Gastrocnemius medialis (tissue), 4 donors: ENCODE measurements at regions of chr2 and their contacts with region 1.

Region 1: DNA sequence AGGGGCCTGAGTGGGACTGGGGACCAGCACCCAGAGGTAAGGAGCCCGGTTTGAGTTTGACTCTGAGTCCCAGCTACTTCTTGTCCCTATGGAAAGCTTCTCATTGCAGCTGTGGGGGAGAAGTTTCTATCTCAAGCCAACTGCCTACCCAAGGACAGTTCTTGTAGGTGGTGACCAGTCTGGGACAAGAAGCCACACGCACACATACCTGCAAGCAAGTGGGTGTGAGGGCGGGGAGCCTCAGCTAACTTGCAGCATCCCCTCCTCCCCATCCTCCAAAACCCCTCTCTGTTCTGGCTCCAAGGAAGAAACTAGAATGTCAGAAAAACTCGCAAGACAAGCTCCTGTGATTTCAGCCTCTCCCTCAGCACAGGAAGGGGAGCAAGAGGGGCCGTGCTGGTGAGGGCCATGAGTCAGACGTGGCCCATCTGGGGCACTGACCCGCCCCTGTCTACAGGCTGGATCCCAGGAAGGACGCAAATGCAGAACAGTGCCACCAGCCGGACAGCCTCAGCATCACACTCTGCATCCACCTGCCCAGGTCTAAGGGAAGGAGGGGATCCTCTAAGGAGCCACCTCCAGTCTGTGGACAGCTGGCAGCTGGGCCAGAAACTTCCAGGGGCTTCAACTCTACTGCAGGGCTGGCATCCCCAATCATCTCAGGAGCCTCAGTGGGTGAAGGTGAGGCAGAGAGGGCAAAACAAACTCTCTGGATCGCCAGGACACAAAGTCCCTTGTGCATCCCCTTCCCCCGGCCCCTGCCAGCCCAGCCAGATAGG is 103.4 kb downstream of the TNS1 start:
- DNase-seq: peak; percentile 64 to 88
- ATAC-seq: peak in 1 of 2 donors; percentile 12
- H3K4me3 ChIP-seq: no peak overlapping the region
- H3K27ac ChIP-seq: peak overlapping the region; percentile 87 to 94 (median 92)
- H3K4me1 ChIP-seq: peaks cover 73 to 74% of the 10 kb centered on the region in 2 donors
- H3K27me3 ChIP-seq: no peaks in the 10 kb centered on the region
- CTCF ChIP-seq: peak; percentile 60 to 86 (median 71)
- POLR2A ChIP-seq: peak in 1 of 2 donors; percentile 50

Region 2: DNA sequence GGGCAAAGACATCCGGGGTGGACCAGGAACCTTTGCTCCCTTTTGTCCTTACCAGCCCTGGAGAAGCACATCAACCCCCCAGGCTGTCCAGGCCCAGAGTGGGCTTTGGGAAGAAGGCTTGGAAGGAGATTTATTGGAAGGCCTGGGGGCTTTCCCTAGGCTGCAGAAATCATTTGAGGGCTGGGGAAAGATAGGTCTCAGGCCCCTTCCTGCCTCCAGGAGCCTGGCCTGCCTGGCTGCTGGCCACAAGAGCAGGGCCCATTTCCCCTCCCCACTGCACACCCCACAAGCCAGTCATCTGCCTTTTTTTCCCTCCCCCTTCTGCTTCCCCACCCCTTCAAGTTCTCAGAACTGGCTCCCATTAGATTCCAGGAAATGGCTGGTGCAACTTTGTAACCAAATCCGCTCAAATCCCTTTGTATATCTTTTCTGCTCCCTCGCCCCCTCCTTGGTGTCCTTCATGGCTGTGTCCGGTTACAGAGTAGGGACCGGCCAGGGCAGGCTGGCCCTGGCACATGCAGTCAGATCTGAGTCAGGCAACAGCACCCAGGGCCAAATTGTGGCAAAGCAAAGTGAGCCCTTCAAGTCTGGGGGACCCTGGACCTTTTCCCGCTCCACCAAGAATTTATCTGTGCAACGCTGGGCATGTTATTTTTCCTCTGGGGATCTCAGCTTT is 1018.8 kb before region 1 on chr2:
- in situ Hi-C with region 1: no loop called
- intact Hi-C with region 1: loop called (anchors 5 kb)
- DNase-seq: peak; percentile 79 to 89
- ATAC-seq: peak; percentile 64 to 72
- H3K4me3 ChIP-seq: no peak overlapping the region
- H3K27ac ChIP-seq: peak overlapping the region; percentile 88 to 95 (median 90)
- H3K4me1 ChIP-seq: peaks cover 77 to 84% of the 10 kb centered on the region in 2 donors
- H3K27me3 ChIP-seq: no peaks in the 10 kb centered on the region
- CTCF ChIP-seq: no peak
- POLR2A ChIP-seq: no peak

Region 3: GRCh38 chr2:217836901-217837491 is 62.4 kb before region 1 on chr2:
- in situ Hi-C with region 1: no loop called
- intact Hi-C with region 1: loop called (anchors 2 kb)
- DNase-seq: peak; percentile 93 to 98
- ATAC-seq: peak; percentile 39 to 41
- H3K4me3 ChIP-seq: peak overlapping the region in 1 of 4 donors; percentile 9
- H3K27ac ChIP-seq: peak overlapping the region; percentile 99 to 100 (median 99)
- H3K4me1 ChIP-seq: peaks cover 96% of the 10 kb centered on the region in 2 donors
- H3K27me3 ChIP-seq: no peaks in the 10 kb centered on the region
- CTCF ChIP-seq: peak in 3 of 5 experiments; percentile 30 to 43 (median 34)
- POLR2A ChIP-seq: peak in 1 of 2 donors; percentile 48

Region 4: DNA sequence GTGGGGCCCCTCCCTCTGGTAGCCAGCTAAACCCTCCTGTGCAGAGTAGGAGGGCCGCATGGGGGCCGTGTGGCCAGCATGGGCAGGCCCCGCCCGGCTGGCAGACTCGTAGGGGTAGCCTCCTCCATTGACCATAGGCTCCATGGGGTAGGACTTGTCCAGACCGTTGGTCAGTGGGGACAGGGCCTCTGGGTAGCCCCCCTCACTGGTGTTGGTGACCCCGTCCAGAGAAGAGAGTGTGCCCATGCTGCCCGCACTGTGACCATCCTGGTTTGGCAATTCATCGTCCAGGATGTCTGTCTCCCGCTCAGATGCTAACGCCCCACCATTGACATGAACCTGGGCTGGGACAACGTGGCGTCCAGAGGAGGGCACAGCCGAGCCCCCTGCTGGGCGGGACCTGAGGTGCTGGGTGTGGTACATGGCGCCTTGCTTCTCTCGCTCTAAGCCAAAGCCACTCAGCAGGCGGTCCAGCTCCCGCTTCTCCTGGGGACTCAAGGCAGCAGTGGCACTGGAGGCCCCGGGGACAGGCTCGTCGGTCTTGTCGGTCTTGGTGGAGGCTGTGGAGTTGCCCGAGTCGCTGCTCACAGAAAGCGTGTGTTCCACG is 51.0 kb before region 1 on chr2:
- in situ Hi-C with region 1: no loop called
- intact Hi-C with region 1: no loop called
- DNase-seq: peak in 1 of 2 donors; percentile 62
- ATAC-seq: no peak
- H3K4me3 ChIP-seq: no peak overlapping the region
- H3K27ac ChIP-seq: peak overlapping the region; percentile 99 to 100 (median 99)
- H3K4me1 ChIP-seq: peaks cover 94 to 96% of the 10 kb centered on the region in 2 donors
- H3K27me3 ChIP-seq: no peaks in the 10 kb centered on the region
- CTCF ChIP-seq: peak in 1 of 5 experiments; percentile 13
- POLR2A ChIP-seq: no peak

Region 5: DNA sequence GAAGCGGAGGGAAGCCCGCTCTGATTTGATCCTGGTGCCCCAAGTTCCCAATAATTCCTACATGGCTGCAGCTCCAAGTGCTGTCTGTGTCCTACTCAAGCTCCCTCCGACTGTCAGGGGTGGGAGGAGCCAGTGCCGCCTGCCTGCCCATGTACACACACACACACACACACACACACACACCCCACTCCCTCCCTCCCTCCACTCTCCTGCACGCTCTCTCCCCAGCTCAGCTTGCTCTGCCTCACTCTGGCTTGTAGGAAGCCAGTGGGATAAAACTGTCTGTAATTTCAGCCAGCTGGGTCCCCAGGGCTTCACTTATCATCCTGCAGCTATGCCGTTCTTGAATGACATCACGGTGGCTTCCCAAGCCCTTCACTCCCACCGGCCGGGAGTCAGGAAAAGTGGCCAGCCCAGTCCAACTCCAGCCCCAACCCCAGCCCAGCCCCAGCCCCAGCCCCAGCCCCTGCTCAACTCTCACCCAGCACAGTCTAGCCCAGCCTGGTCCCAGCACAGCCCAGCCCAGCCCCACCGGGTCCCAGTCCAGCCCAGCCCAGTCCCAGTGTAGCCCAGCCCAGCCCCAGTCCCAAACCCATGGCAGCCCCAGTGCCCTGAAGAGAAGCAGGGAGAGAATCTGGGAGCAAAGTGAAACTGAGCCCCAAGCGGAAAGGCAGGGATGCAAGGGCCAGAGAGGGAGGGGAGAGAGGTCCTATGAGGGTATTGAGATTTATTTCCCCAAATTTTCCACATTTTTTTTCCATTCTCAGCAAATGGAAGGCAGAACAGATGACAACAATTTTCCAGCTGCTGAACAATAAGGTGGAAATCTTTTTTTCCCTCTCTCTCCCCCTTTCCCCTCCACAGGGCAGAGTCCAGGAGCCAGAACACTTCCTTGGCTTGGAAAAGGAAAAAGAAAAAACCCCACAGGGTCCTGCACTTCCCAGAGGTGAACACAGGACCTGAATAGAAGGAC is 40.6 kb before region 1 on chr2:
- in situ Hi-C with region 1: no loop called
- intact Hi-C with region 1: loop called (anchors 2 kb)
- DNase-seq: peak; percentile 87 to 97
- ATAC-seq: peak; percentile 62 to 64
- H3K4me3 ChIP-seq: peak overlapping the region; percentile 72 to 89 (median 81)
- H3K27ac ChIP-seq: peak overlapping the region; percentile 99 to 100 (median 99)
- H3K4me1 ChIP-seq: peaks cover 69 to 73% of the 10 kb centered on the region in 2 donors
- H3K27me3 ChIP-seq: no peaks in the 10 kb centered on the region
- CTCF ChIP-seq: no peak
- POLR2A ChIP-seq: peak; percentile 70 to 73

Region 6: GRCh38 chr2:217922101-217923006 is 22.9 kb after region 1 on chr2:
- in situ Hi-C with region 1: no loop called
- intact Hi-C with region 1: loop called (anchors 1 kb)
- DNase-seq: peak in 1 of 2 donors; percentile 49
- ATAC-seq: peak; percentile 50 to 53
- H3K4me3 ChIP-seq: peak overlapping the region in 1 of 4 donors; percentile 32
- H3K27ac ChIP-seq: peak overlapping the region; percentile 87 to 94 (median 92)
- H3K4me1 ChIP-seq: peaks cover 65 to 96% of the 10 kb centered on the region in 2 donors
- H3K27me3 ChIP-seq: no peaks in the 10 kb centered on the region
- CTCF ChIP-seq: peak in 4 of 5 experiments; percentile 42 to 70 (median 62)
- POLR2A ChIP-seq: no peak

Region 7: DNA sequence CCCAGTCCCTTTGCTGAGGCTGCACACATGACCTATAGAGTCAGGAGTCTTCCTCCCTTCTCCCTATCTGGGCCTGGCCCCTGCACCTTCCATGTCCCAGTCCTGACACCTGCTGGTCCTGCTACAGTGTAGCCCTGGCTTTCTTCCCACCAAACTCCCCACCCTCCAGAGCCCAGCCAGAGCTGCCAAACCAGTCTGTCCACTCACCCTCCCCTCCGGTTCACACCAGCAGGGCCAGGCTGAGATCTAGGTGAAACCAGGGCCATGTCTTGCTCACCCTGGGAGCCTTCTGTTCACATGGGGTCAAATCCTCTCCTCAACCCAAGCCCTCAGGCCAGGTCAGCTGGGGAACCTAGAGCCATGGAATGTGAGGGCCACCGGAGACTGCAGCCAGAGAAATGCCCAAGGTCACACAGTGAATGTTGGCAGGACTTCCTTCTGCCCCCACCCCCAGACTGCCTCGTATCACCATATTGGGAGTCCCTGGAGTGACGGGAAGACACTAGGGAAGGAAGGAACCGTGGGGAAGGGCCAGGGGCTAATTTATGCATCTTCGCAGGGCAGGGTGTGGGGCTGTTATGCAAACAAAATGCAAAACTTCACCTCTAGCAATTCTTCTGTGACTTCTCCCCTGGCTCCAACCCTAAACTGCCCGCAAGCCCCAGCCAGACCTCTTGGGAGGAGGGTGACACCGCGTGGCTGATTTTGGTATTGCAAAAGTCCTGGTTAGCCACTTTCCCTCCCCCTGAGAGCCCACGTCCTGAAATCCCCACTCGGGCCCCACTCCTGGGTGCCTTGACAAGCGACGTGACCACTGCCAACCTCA is 88.8 kb after region 1 on chr2:
- in situ Hi-C with region 1: loop called in 1 of 4 experiments (anchors 10 kb)
- intact Hi-C with region 1: no loop called
- DNase-seq: peak; percentile 72 to 85
- ATAC-seq: peak; percentile 73 to 80
- H3K4me3 ChIP-seq: peak overlapping the region in 1 of 4 donors; percentile 2
- H3K27ac ChIP-seq: peak overlapping the region; percentile 65 to 78 (median 72)
- H3K4me1 ChIP-seq: peaks cover 20 to 23% of the 10 kb centered on the region in 2 donors
- H3K27me3 ChIP-seq: no peaks in the 10 kb centered on the region
- CTCF ChIP-seq: peak; percentile 92 to 97 (median 95)
- POLR2A ChIP-seq: no peak

Region 8: GRCh38 chr2:218286570-218287459 is 387.4 kb after region 1 on chr2:
- in situ Hi-C with region 1: no loop called
- intact Hi-C with region 1: loop called (anchors 10 kb)
- DNase-seq: peak; percentile 92 to 96
- ATAC-seq: peak; percentile 66 to 70
- H3K4me3 ChIP-seq: peak overlapping the region; percentile 59 to 70 (median 61)
- H3K27ac ChIP-seq: peak overlapping the region; percentile 93 to 100 (median 98)
- H3K4me1 ChIP-seq: peaks cover 92 to 97% of the 10 kb centered on the region in 2 donors
- H3K27me3 ChIP-seq: no peaks in the 10 kb centered on the region
- CTCF ChIP-seq: no peak
- POLR2A ChIP-seq: peak; percentile 66 to 69